Dendritic cell treated with granulocyte-macrophage colony-stimulating factor and Interleukin-4, amounts not matched to agents 40 ng/mL and 50 ng/mL, for 4 days (primary cell): ENCODE measurements at regions of chr17 and their contacts with region 1.

Region 1: GRCh38 chr17:81890447-81891299 is 713 bp downstream of the ALYREF start:
- H3K4me3 Mint-ChIP-seq: peak overlapping the region; percentile 86
- H3K27ac Mint-ChIP-seq: peak overlapping the region; percentile 98
- H3K4me1 Mint-ChIP-seq: peaks cover 46% of the 10 kb centered on the region
- H3K27me3 Mint-ChIP-seq: no peaks in the 10 kb centered on the region

Region 2: GRCh38 chr17:81871387-81872230 is 19.1 kb before region 1 on chr17:
- intact Hi-C with region 1: loop called (anchors 1 kb)
- H3K4me3 Mint-ChIP-seq: peak overlapping the region; percentile 81
- H3K27ac Mint-ChIP-seq: peak overlapping the region; percentile 95
- H3K4me1 Mint-ChIP-seq: peaks cover 50% of the 10 kb centered on the region
- H3K27me3 Mint-ChIP-seq: no peaks in the 10 kb centered on the region

Region 3: GRCh38 chr17:81927653-81928543 is 37.2 kb after region 1 on chr17 and contains the start of gene MAFG:
- intact Hi-C with region 1: loop called (anchors 5 kb)
- H3K4me3 Mint-ChIP-seq: peak within 1 kb of the TSS; percentile 93
- H3K27ac Mint-ChIP-seq: peak within 1 kb of the TSS; percentile 90
- H3K4me1 Mint-ChIP-seq: peaks cover 54% of the 10 kb centered on the region
- H3K27me3 Mint-ChIP-seq: peaks cover 46% of the 10 kb centered on the region